ENCODE measurements at regions of chr20 and their contacts with region 1.

Region 1: GRCh38 chr20:34363062-34363464 is at the start of gene ITCH:
- DNase-seq: peak; percentile 82 to 91 (median 88)
- ATAC-seq: peak; percentile 100
- H3K4me3 ChIP-seq: peak within 1 kb of the TSS; percentile 93
- H3K4me3 Mint-ChIP-seq: peak within 1 kb of the TSS; percentile 96 to 100 (median 98)
- H3K27ac ChIP-seq: peak within 1 kb of the TSS; percentile 98
- H3K27ac Mint-ChIP-seq: peak within 1 kb of the TSS; percentile 91 to 100 (median 98)
- H3K4me1 ChIP-seq: peaks cover 25 to 38% of the 10 kb centered on the region in 2 donors
- H3K4me1 Mint-ChIP-seq: peaks cover 26 to 50% (median 45%) of the 10 kb centered on the region in 7 donors
- H3K27me3 ChIP-seq: no peaks in the 10 kb centered on the region
- H3K27me3 Mint-ChIP-seq: peaks cover 0 to 3% (median 0%) of the 10 kb centered on the region in 5 donors
- total RNA-seq, gene ITCH: 50.8 to 70.4 (median 60.5) TPM

Region 2: DNA sequence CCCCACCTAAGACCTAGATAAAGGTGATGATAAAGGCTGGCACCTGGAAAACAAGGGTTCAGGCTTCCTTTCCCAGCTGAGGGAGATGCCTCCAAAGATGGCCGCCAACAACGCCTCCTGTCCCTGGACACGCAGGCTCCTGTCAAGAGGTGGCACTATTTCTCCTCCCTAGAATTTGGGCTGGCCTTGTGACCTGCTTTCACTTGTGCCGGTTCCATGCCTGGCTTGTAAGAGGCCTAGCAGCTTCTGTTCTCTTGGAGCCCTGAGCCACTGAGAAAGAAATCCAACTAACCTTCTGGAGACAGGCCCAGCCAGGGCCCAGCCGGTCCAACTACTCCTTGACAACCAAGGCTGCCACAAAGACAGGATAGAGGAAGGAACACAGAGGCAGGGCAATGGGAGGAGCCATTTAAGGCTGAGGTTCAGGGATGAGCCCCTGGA is 429.6 kb before region 1 on chr20:
- CTCF ChIA-PET with region 1: no interaction called
- POLR2A ChIA-PET with region 1: no interaction called
- intact Hi-C with region 1: no loop called
- DNase-seq: peak; percentile 14 to 62 (median 48)
- ATAC-seq: peak; percentile 71
- H3K4me3 ChIP-seq: no peak overlapping the region
- H3K4me3 Mint-ChIP-seq: no peak overlapping the region
- H3K27ac ChIP-seq: peak overlapping the region; percentile 13
- H3K27ac Mint-ChIP-seq: peak overlapping the region in 1 of 9 donors; percentile 27
- H3K4me1 ChIP-seq: no peaks in the 10 kb centered on the region
- H3K4me1 Mint-ChIP-seq: peaks cover 0 to 2% (median 0%) of the 10 kb centered on the region in 7 donors
- H3K27me3 ChIP-seq: no peaks in the 10 kb centered on the region
- H3K27me3 Mint-ChIP-seq: peaks cover 0 to 3% (median 0%) of the 10 kb centered on the region in 5 donors

Region 3: GRCh38 chr20:34302723-34303528 is 60.1 kb before region 1 on chr20 and contains the start of gene AHCY:
- CTCF ChIA-PET with region 1: no interaction called
- POLR2A ChIA-PET with region 1: interaction called, 5 read pairs
- intact Hi-C with region 1: loop called (anchors 1 kb)
- DNase-seq: peak; percentile 84 to 95 (median 92)
- ATAC-seq: peak; percentile 96
- H3K4me3 ChIP-seq: peak within 1 kb of the TSS; percentile 91
- H3K4me3 Mint-ChIP-seq: peak within 1 kb of the TSS; percentile 90 to 96 (median 91)
- H3K27ac ChIP-seq: peak within 1 kb of the TSS; percentile 87
- H3K27ac Mint-ChIP-seq: peak within 1 kb of the TSS; percentile 89 to 95 (median 93)
- H3K4me1 ChIP-seq: peaks cover 3 to 6% of the 10 kb centered on the region in 2 donors
- H3K4me1 Mint-ChIP-seq: peaks cover 0 to 27% (median 14%) of the 10 kb centered on the region in 7 donors
- H3K27me3 ChIP-seq: no peaks in the 10 kb centered on the region
- H3K27me3 Mint-ChIP-seq: peaks cover 0 to 2% (median 0%) of the 10 kb centered on the region in 5 donors
- total RNA-seq, gene AHCY: 19.1 to 62.9 (median 23.7) TPM

Region 4: GRCh38 chr20:34516247-34517113 is 153.4 kb after region 1 on chr20 and contains the start of gene DYNLRB1:
- CTCF ChIA-PET with region 1: interaction called, 6 read pairs
- POLR2A ChIA-PET with region 1: interaction called, 5 read pairs
- intact Hi-C with region 1: loop called (anchors 1 kb)
- DNase-seq: peak; percentile 87 to 94 (median 92)
- ATAC-seq: peak; percentile 88
- H3K4me3 ChIP-seq: peak within 1 kb of the TSS; percentile 96
- H3K4me3 Mint-ChIP-seq: peak within 1 kb of the TSS; percentile 97 to 100 (median 99)
- H3K27ac ChIP-seq: peak within 1 kb of the TSS; percentile 86
- H3K27ac Mint-ChIP-seq: peak within 1 kb of the TSS; percentile 94 to 99 (median 97)
- H3K4me1 ChIP-seq: peaks cover 8 to 11% of the 10 kb centered on the region in 2 donors
- H3K4me1 Mint-ChIP-seq: peaks cover 12 to 59% (median 51%) of the 10 kb centered on the region in 7 donors
- H3K27me3 ChIP-seq: no peaks in the 10 kb centered on the region
- H3K27me3 Mint-ChIP-seq: no peaks in the 10 kb centered on the region
- total RNA-seq, gene DYNLRB1: 45.9 to 91.9 (median 60.7) TPM

Region 5: GRCh38 chr20:34654207-34654744 is 291.2 kb after region 1 on chr20:
- CTCF ChIA-PET with region 1: no interaction called
- POLR2A ChIA-PET with region 1: no interaction called
- intact Hi-C with region 1: no loop called
- DNase-seq: no peak
- ATAC-seq: no peak
- H3K4me3 ChIP-seq: no peak overlapping the region
- H3K4me3 Mint-ChIP-seq: no peak overlapping the region
- H3K27ac ChIP-seq: no peak overlapping the region
- H3K27ac Mint-ChIP-seq: no peak overlapping the region
- H3K4me1 ChIP-seq: no peaks in the 10 kb centered on the region
- H3K4me1 Mint-ChIP-seq: no peaks in the 10 kb centered on the region
- H3K27me3 ChIP-seq: no peaks in the 10 kb centered on the region
- H3K27me3 Mint-ChIP-seq: no peaks in the 10 kb centered on the region

Region 6: GRCh38 chr20:34704177-34705007 is 341.3 kb after region 1 on chr20 and contains the start of gene TP53INP2:
- CTCF ChIA-PET with region 1: no interaction called
- POLR2A ChIA-PET with region 1: interaction called, 3 read pairs
- intact Hi-C with region 1: loop called in 1 of 2 experiments (anchors 5 kb)
- DNase-seq: peak; percentile 82 to 93 (median 87)
- ATAC-seq: peak; percentile 78
- H3K4me3 ChIP-seq: peak within 1 kb of the TSS; percentile 59
- H3K4me3 Mint-ChIP-seq: peak within 1 kb of the TSS; percentile 91 to 98 (median 94)
- H3K27ac ChIP-seq: peak within 1 kb of the TSS; percentile 94
- H3K27ac Mint-ChIP-seq: peak within 1 kb of the TSS; percentile 79 to 100 (median 97)
- H3K4me1 ChIP-seq: peaks cover 6 to 7% of the 10 kb centered on the region in 2 donors
- H3K4me1 Mint-ChIP-seq: peaks cover 15 to 39% (median 25%) of the 10 kb centered on the region in 7 donors
- H3K27me3 ChIP-seq: no peaks in the 10 kb centered on the region
- H3K27me3 Mint-ChIP-seq: peaks cover 0 to 25% (median 6%) of the 10 kb centered on the region in 5 donors
- total RNA-seq, gene TP53INP2: 1.2 to 41.4 (median 1.5) TPM

Region 7: DNA sequence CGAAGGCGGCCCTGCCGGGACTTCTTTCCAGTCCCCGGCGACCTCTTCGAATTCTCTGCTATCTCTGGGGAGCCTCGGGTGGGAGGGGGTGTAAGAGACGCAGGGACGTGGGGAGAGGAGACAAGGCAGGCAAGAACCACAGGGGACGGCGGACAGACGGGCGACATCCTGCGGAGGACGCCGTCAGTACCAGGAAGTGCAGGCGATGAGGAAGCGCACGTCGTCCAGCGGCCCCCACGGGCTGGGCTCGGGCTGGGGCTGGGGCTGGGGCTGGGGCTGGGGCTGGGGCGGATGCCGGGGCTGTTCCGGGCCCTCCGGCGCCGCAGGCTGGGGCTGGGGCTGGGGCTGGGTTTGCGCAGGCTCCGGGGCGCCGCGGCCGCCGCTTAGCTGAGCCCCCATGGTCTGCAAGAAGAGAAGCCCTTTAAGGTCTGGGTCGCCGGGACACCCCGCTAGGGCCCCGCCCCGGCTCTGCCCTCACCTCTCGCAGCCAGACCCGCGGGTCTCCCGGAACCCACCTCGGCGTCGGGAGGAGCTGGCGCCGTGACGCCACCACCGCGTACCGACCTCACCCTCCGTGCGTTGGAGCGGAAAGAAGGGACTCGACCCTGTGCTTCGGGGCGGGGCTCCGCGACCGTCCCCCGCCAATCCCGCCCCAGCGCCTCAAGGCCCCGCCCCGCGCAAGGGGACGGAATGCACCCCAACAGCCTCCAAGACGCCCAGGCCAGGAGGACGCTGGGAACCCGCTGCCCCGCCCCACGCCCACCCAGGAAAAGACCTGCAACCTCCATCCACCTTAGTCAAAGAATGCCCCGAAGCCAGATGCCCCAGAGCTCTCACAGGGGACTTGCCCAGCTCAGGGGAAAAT is 914.7 kb after region 1 on chr20 and contains the start of gene MMP24OS:
- CTCF ChIA-PET with region 1: no interaction called
- POLR2A ChIA-PET with region 1: no interaction called
- intact Hi-C with region 1: loop called in 1 of 2 experiments (anchors 5 kb)
- DNase-seq: peak; percentile 77 to 90 (median 87)
- ATAC-seq: peak; percentile 95
- H3K4me3 ChIP-seq: peak within 1 kb of the TSS; percentile 99
- H3K4me3 Mint-ChIP-seq: peak within 1 kb of the TSS; percentile 84 to 97 (median 96)
- H3K27ac ChIP-seq: peak within 1 kb of the TSS; percentile 96
- H3K27ac Mint-ChIP-seq: peak within 1 kb of the TSS; percentile 95 to 99 (median 98)
- H3K4me1 ChIP-seq: peaks cover 11 to 18% of the 10 kb centered on the region in 2 donors
- H3K4me1 Mint-ChIP-seq: peaks cover 9 to 46% (median 28%) of the 10 kb centered on the region in 7 donors
- H3K27me3 ChIP-seq: no peaks in the 10 kb centered on the region
- H3K27me3 Mint-ChIP-seq: no peaks in the 10 kb centered on the region
- total RNA-seq, gene MMP24OS: 43.8 to 88.6 (median 69.4) TPM

Measured in naive thymus-derived CD4-positive, alpha-beta T cell (primary cell).